ENCODE measurements at regions of chr10 and their contacts with region 1.

Region 1: GRCh38 chr10:97553575-97554031 is 19.0 kb upstream of the ANKRD2 start:
- DNase-seq: peak; percentile 67 to 90 (median 76)
- H3K4me3 ChIP-seq: no peak overlapping the region
- H3K27ac ChIP-seq: no peak overlapping the region
- H3K4me1 ChIP-seq: no peaks in the 10 kb centered on the region
- H3K27me3 ChIP-seq: no peaks in the 10 kb centered on the region
- CTCF ChIP-seq: peak; percentile 40 to 88 (median 84)
- POLR2A ChIP-seq: no peak

Region 2: DNA sequence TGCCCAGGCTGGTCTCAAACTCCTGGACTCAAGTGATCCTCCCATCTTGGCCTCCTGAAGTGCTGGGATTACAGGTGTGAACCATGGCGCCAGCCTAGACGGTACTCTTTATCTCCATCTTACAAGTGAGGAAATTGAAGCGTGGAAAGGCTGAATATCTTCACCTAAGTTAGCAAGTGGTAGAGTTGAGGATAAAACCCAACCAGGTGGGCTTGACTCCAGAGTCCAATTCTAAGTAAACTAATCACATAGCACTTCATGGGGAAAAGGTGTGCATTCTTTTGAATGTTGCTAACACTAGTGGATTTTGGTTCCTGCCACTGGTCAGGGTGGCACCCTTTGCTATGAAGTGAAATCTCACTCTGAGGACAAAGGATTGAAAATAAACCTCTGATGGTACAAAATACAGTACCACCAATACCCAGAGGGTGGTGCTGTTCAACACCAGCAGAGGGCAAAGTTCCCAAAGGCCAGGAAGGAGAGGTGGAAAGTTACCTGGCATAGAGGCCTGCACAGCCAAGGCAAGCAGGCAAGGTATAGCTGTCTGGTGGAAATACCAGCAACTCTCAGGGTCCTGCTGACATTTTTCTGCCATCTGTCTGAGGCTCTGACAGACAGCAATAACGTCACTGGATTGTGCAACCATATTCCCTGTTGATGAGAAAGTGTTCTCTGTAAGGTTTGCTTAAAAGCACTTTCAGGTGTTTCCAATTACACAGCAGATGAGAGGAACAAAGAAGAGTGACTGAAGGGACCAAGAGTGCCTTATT is 90.1 kb before region 1 on chr10:
- intact Hi-C with region 1: loop called (anchors 5 kb)
- DNase-seq: peak; percentile 35 to 73 (median 53)
- H3K4me3 ChIP-seq: no peak overlapping the region
- H3K27ac ChIP-seq: peak overlapping the region in 4 of 5 donors; percentile 24 to 73 (median 48)
- H3K4me1 ChIP-seq: peaks cover 0 to 8% of the 10 kb centered on the region in 2 donors
- H3K27me3 ChIP-seq: no peaks in the 10 kb centered on the region
- CTCF ChIP-seq: peak; percentile 77 to 94 (median 88)
- POLR2A ChIP-seq: no peak